IMR-90 (cell line): ENCODE measurements at regions of chr9 and their contacts with region 1.

Region 1: DNA sequence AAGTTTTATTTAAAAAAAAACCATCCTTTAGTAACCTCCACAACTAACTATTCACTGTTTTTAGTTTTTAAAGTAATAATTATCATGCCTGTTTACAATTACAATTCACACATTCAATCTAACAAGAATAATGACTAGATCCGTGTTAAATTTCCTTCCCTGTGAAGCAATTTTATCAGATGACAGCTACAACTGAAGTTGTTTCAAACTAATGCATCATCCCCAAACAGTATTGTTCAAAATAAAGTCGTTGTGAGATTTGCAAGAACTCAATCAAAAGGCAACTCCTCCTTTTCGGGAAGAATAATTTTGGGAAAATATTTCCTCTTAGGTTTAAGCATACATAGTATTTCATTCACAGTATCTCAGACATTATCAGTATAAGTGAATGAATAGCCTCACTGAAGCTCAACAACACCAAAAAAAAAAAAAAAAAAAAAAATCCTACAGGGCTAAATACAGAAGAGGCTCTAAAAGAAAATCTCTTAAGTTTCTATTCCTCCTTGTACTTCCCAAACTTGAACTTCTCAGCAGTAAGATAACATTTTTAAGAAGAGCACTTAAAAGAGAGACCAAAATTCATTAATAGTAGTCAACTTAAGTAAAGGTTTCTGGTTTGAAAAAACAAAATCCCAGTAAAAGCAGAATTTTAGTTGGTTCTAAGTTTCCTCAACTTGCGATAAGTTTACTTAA is 9.4 kb downstream of the C9orf72 start:
- DNase-seq: no peak
- ATAC-seq: no peak
- H3K4me3 ChIP-seq: no peak overlapping the region
- H3K27ac ChIP-seq: no peak overlapping the region
- H3K4me1 ChIP-seq: no peaks in the 10 kb centered on the region
- H3K27me3 ChIP-seq: no peaks in the 10 kb centered on the region
- CTCF ChIP-seq: no peak
- POLR2A ChIP-seq: no peak
- RAD21 ChIP-seq: no peak

Region 2: DNA sequence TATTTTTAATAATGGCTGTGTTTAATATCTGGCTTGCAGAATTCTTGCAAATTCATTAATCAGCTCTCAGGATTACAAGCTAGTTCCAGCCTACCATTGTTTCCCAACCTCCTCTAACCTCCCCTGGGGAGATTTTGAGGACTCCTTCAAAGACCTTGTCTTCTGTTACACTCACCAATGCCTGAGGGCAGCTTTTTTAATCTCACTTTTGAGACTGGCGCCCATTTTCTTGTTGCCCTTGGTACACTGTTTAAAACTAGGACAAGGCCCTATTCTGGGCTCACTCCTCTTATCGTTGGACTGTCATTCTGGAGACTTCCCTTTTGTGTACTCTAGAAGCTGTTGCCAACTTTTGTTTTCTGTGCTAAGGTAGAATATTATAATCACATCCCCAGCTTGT is 253.3 kb before region 1 on chr9:
- CTCF ChIA-PET with region 1: no interaction called
- POLR2A ChIA-PET with region 1: interaction called, 14 read pairs
- dilution Hi-C with region 1: no loop called
- in situ Hi-C with region 1: no loop called
- intact Hi-C with region 1: no loop called
- DNase-seq: no peak
- ATAC-seq: no peak
- H3K4me3 ChIP-seq: no peak overlapping the region
- H3K27ac ChIP-seq: no peak overlapping the region
- H3K4me1 ChIP-seq: no peaks in the 10 kb centered on the region
- H3K27me3 ChIP-seq: peaks cover 7% of the 10 kb centered on the region
- CTCF ChIP-seq: no peak
- POLR2A ChIP-seq: no peak
- RAD21 ChIP-seq: no peak